ENCODE measurements at regions of chr12 and their contacts with region 1.

Region 1: GRCh38 chr12:108838194-108839017 is 19.0 kb downstream of the SSH1 start:
- DNase-seq: peak; percentile 97
- ATAC-seq: peak; percentile 85
- H3K4me3 ChIP-seq: peak overlapping the region in 1 of 2 experiments; percentile 11; a peak in 2 of 4 replicates
- H3K27ac ChIP-seq: peak overlapping the region; percentile 99
- H3K4me1 ChIP-seq: peaks cover 78 to 95% of the 10 kb centered on the region in 2 experiments
- H3K27me3 ChIP-seq: no peaks in the 10 kb centered on the region
- CTCF ChIP-seq: no peak
- POLR2A ChIP-seq: no peak
- RAD21 ChIP-seq: no peak

Region 2: DNA sequence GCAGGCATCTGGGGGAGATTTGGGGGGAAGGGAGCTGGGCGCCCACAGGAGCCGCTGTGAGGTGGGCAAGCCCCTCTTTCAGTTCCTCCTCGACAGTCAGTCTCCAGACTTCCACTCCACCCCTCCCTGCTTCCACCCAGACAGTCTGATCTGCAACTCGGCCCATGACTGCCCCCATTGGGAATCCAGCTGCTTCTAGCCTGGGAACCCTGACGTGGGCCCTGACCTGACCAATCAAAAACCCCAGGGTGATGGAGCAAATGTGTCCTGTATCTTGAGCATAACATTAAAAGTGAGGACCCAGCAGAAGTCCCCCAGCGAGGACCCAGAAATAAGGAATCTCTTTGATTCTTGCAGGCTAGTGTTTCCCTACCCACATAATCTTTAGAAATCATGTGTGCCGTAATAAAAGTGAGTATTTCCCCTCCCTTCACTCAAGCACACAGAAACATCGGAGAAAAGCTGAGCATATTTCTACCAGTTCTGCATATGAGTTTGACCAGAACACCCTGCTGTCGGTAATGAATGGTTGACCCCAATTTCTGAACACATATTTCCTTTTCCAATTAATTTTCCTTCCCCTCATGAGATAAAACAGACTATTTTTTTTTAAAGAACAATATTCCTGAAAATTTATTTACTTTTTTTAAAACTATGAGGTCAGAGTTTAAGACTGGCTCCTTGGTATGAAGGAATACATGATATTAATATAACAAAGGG is 12.6 kb after region 1 on chr12:
- CTCF ChIA-PET with region 1: no interaction called
- POLR2A ChIA-PET with region 1: interaction called, 21 read pairs
- RAD21 ChIA-PET with region 1: no interaction called
- intact Hi-C with region 1: loop called (anchors 1 kb)
- DNase-seq: no peak
- ATAC-seq: peak; percentile 60
- H3K4me3 ChIP-seq: no peak overlapping the region
- H3K27ac ChIP-seq: peak overlapping the region; percentile 92
- H3K4me1 ChIP-seq: peaks cover 59 to 82% of the 10 kb centered on the region in 2 experiments
- H3K27me3 ChIP-seq: no peaks in the 10 kb centered on the region
- CTCF ChIP-seq: no peak
- POLR2A ChIP-seq: no peak
- RAD21 ChIP-seq: no peak

Region 3: DNA sequence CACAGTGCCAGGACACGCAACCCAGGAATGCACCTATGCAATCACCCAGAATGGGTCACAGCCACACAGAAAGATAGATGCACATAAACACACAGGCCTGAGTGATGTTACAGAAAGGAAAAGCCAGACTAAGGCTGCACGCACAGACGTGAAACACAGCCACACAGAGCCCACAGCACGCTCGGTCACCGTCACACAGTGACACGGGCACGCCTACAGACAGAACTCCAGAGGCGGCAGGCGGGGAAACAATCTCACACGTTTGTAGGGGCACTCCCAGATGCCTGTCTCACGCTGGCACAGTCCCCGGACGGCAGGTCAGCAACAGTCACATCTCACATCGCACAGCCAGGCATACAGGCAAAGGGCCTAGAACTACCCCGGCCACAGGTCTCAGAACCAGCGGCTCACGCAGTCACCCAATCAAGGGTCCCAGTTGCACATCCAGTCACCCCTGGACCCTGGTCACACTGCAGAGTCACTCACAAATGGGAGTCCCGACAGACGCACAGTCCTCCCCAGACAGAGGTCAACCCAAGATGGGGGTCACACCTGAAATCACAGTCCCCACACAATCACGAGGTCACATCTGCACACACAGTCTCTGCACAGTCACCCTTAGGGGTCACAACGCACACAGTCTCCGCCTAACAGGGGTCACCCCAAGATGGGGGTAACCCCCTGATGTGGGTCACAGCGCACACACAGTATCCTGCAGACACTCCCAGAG is 18.2 kb after region 1 on chr12:
- CTCF ChIA-PET with region 1: no interaction called
- POLR2A ChIA-PET with region 1: interaction called, 21 read pairs
- RAD21 ChIA-PET with region 1: no interaction called
- intact Hi-C with region 1: loop called (anchors 1 kb)
- DNase-seq: no peak
- ATAC-seq: peak; percentile 17
- H3K4me3 ChIP-seq: peak overlapping the region; percentile 86 to 99
- H3K27ac ChIP-seq: peak overlapping the region; percentile 92
- H3K4me1 ChIP-seq: peaks cover 50 to 73% of the 10 kb centered on the region in 2 experiments
- H3K27me3 ChIP-seq: no peaks in the 10 kb centered on the region
- CTCF ChIP-seq: no peak
- POLR2A ChIP-seq: no peak
- RAD21 ChIP-seq: no peak

Measured in HCT116 (cell line).